ENCODE measurements at regions of chr7 and their contacts with region 1.

Region 1: GRCh38 chr7:139645572-139646523 is 122.4 kb downstream of the CLEC2L start:
- DNase-seq: peak; percentile 87
- ATAC-seq: peak; percentile 72
- H3K4me3 Mint-ChIP-seq: no peak overlapping the region
- H3K27ac Mint-ChIP-seq: peak overlapping the region; percentile 25
- H3K4me1 Mint-ChIP-seq: peaks cover 44% of the 10 kb centered on the region
- H3K27me3 Mint-ChIP-seq: no peaks in the 10 kb centered on the region

Region 2: GRCh38 chr7:139620676-139621344 is 25.0 kb before region 1 on chr7:
- CTCF ChIA-PET with region 1: interaction called, 31 read pairs
- DNase-seq: peak; percentile 69
- ATAC-seq: peak; percentile 78
- H3K4me3 Mint-ChIP-seq: no peak overlapping the region
- H3K27ac Mint-ChIP-seq: no peak overlapping the region
- H3K4me1 Mint-ChIP-seq: peaks cover 10% of the 10 kb centered on the region
- H3K27me3 Mint-ChIP-seq: no peaks in the 10 kb centered on the region

Region 3: GRCh38 chr7:139635526-139636302 is 10.1 kb before region 1 on chr7:
- CTCF ChIA-PET with region 1: interaction called, 32 read pairs
- DNase-seq: peak; percentile 90
- ATAC-seq: peak; percentile 97
- H3K4me3 Mint-ChIP-seq: peak overlapping the region; percentile 66
- H3K27ac Mint-ChIP-seq: peak overlapping the region; percentile 93
- H3K4me1 Mint-ChIP-seq: peaks cover 28% of the 10 kb centered on the region
- H3K27me3 Mint-ChIP-seq: no peaks in the 10 kb centered on the region

Region 4: GRCh38 chr7:139771001-139771970 is 125.4 kb after region 1 on chr7:
- CTCF ChIA-PET with region 1: interaction called, 18 read pairs
- DNase-seq: no peak
- ATAC-seq: no peak
- H3K4me3 Mint-ChIP-seq: no peak overlapping the region
- H3K27ac Mint-ChIP-seq: peak overlapping the region; percentile 7
- H3K4me1 Mint-ChIP-seq: peaks cover 82% of the 10 kb centered on the region
- H3K27me3 Mint-ChIP-seq: no peaks in the 10 kb centered on the region

Region 5: DNA sequence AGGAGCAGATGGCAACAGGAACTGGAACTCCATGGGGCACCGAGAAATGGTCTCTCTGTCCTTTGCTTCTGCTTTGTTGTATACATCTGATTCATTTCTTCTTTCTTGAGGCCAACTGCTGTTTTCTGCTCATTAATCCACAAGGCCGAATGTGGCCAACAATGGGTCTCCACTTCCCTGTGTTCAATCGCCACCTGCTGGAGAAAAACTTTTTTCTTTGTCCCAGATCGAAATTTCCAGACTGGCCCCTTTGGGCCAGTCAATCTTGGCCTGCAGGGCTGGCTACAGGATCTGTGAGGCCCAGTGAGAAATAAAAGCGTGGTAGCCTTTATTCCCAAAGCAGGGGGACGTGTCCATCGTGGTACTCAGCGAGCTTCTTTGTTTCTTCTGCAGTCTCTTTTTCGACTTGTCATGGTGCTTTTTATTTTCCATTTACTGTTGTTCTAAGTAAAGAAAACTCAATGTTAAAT is 358.1 kb after region 1 on chr7:
- CTCF ChIA-PET with region 1: interaction called, 63 read pairs
- DNase-seq: peak; percentile 53
- ATAC-seq: no peak
- H3K4me3 Mint-ChIP-seq: no peak overlapping the region
- H3K27ac Mint-ChIP-seq: no peak overlapping the region
- H3K4me1 Mint-ChIP-seq: peaks cover 3% of the 10 kb centered on the region
- H3K27me3 Mint-ChIP-seq: no peaks in the 10 kb centered on the region